ENCODE measurements at regions of chr7 and their contacts with region 1.

Region 1: GRCh38 chr7:90708841-90709317 is 112.8 kb downstream of the CDK14 start:
- DNase-seq: peak; percentile 84
- ATAC-seq: peak; percentile 53
- H3K4me3 ChIP-seq: peak overlapping the region; percentile 46 to 80 (median 59)
- H3K4me3 Mint-ChIP-seq: peak overlapping the region; percentile 88
- H3K27ac ChIP-seq: peak overlapping the region; percentile 72 to 83
- H3K27ac Mint-ChIP-seq: peak overlapping the region; percentile 90
- H3K4me1 ChIP-seq: peaks cover 59 to 66% of the 10 kb centered on the region in 2 donors
- H3K4me1 Mint-ChIP-seq: peaks cover 73% of the 10 kb centered on the region
- H3K27me3 ChIP-seq: no peaks in the 10 kb centered on the region
- H3K27me3 Mint-ChIP-seq: no peaks in the 10 kb centered on the region
- CTCF ChIP-seq: peak; percentile 86

Region 2: GRCh38 chr7:90403174-90404113 is 305.4 kb before region 1 on chr7 and contains the start of gene CLDN12:
- CTCF ChIA-PET with region 1: no interaction called
- POLR2A ChIA-PET with region 1: no interaction called
- intact Hi-C with region 1: loop called (anchors 10 kb)
- DNase-seq: peak; percentile 90
- ATAC-seq: peak; percentile 96
- H3K4me3 ChIP-seq: peak within 1 kb of the TSS; percentile 65 to 98 (median 81)
- H3K4me3 Mint-ChIP-seq: peak within 1 kb of the TSS; percentile 99
- H3K27ac ChIP-seq: peak within 1 kb of the TSS; percentile 47 to 72
- H3K27ac Mint-ChIP-seq: peak within 1 kb of the TSS; percentile 98
- H3K4me1 ChIP-seq: peaks cover 5% of the 10 kb centered on the region in 2 donors
- H3K4me1 Mint-ChIP-seq: peaks cover 20% of the 10 kb centered on the region
- H3K27me3 ChIP-seq: no peaks in the 10 kb centered on the region
- H3K27me3 Mint-ChIP-seq: no peaks in the 10 kb centered on the region
- CTCF ChIP-seq: no peak
- total RNA-seq, gene CLDN12: 14.1 and 17.3 TPM in 2 replicates

Region 3: GRCh38 chr7:90690159-90690858 is 18.6 kb before region 1 on chr7:
- CTCF ChIA-PET with region 1: interaction called, 13 read pairs
- POLR2A ChIA-PET with region 1: no interaction called
- intact Hi-C with region 1: no loop called
- DNase-seq: no peak
- ATAC-seq: peak; percentile 33
- H3K4me3 ChIP-seq: peak overlapping the region in 1 of 5 experiments; percentile 32
- H3K4me3 Mint-ChIP-seq: no peak overlapping the region
- H3K27ac ChIP-seq: no peak overlapping the region
- H3K27ac Mint-ChIP-seq: no peak overlapping the region
- H3K4me1 ChIP-seq: peaks cover 10 to 17% of the 10 kb centered on the region in 2 donors
- H3K4me1 Mint-ChIP-seq: peaks cover 35% of the 10 kb centered on the region
- H3K27me3 ChIP-seq: no peaks in the 10 kb centered on the region
- H3K27me3 Mint-ChIP-seq: no peaks in the 10 kb centered on the region
- CTCF ChIP-seq: peak; percentile 62

Region 4: GRCh38 chr7:90726623-90727022 is 17.7 kb after region 1 on chr7:
- CTCF ChIA-PET with region 1: interaction called, 16 read pairs
- POLR2A ChIA-PET with region 1: interaction called, 7 read pairs
- intact Hi-C with region 1: loop called (anchors 1 kb)
- DNase-seq: no peak
- ATAC-seq: no peak
- H3K4me3 ChIP-seq: peak overlapping the region in 4 of 5 experiments; percentile 9 to 59 (median 23)
- H3K4me3 Mint-ChIP-seq: peak overlapping the region; percentile 79
- H3K27ac ChIP-seq: peak overlapping the region; percentile 30 to 84
- H3K27ac Mint-ChIP-seq: peak overlapping the region; percentile 81
- H3K4me1 ChIP-seq: peaks cover 45 to 70% of the 10 kb centered on the region in 2 donors
- H3K4me1 Mint-ChIP-seq: peaks cover 81% of the 10 kb centered on the region
- H3K27me3 ChIP-seq: no peaks in the 10 kb centered on the region
- H3K27me3 Mint-ChIP-seq: no peaks in the 10 kb centered on the region
- CTCF ChIP-seq: no peak

Region 5: DNA sequence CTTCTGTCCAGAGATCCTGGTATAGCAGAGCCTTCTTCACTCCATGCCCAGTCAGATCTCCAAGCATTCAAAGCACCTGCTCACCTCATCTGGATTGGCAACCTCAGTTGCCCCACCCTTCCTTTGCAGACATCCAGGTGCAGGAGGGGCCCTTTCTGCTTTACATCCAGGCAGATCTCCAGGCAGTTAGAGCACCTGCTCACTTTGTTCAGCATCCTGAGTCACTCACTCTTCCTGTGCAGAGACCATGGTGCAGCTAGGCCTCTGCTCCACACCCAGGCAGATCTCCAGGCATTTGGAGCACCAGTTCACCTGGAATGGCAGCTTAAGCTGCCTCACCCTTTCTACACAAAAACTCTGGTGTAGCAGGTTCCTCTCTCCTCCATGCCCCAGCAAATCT is 40.4 kb after region 1 on chr7:
- CTCF ChIA-PET with region 1: interaction called, 72 read pairs
- POLR2A ChIA-PET with region 1: interaction called, 5 read pairs
- intact Hi-C with region 1: loop called (anchors 2 kb)
- DNase-seq: no peak
- ATAC-seq: no peak
- H3K4me3 ChIP-seq: no peak overlapping the region
- H3K4me3 Mint-ChIP-seq: peak overlapping the region; percentile 52
- H3K27ac ChIP-seq: no peak overlapping the region
- H3K27ac Mint-ChIP-seq: peak overlapping the region; percentile 54
- H3K4me1 ChIP-seq: peaks cover 15 to 24% of the 10 kb centered on the region in 2 donors
- H3K4me1 Mint-ChIP-seq: peaks cover 66% of the 10 kb centered on the region
- H3K27me3 ChIP-seq: no peaks in the 10 kb centered on the region
- H3K27me3 Mint-ChIP-seq: no peaks in the 10 kb centered on the region
- CTCF ChIP-seq: no peak

Region 6: GRCh38 chr7:91034459-91035368 is 325.8 kb after region 1 on chr7:
- CTCF ChIA-PET with region 1: interaction called, 64 read pairs
- POLR2A ChIA-PET with region 1: no interaction called
- intact Hi-C with region 1: loop called (anchors 1 kb)
- DNase-seq: peak; percentile 56
- ATAC-seq: no peak
- H3K4me3 ChIP-seq: no peak overlapping the region
- H3K4me3 Mint-ChIP-seq: no peak overlapping the region
- H3K27ac ChIP-seq: no peak overlapping the region
- H3K27ac Mint-ChIP-seq: no peak overlapping the region
- H3K4me1 ChIP-seq: no peaks in the 10 kb centered on the region
- H3K4me1 Mint-ChIP-seq: peaks cover 6% of the 10 kb centered on the region
- H3K27me3 ChIP-seq: no peaks in the 10 kb centered on the region
- H3K27me3 Mint-ChIP-seq: no peaks in the 10 kb centered on the region
- CTCF ChIP-seq: peak; percentile 68

Region 7: GRCh38 chr7:91527460-91527859 is 818.6 kb after region 1 on chr7:
- CTCF ChIA-PET with region 1: no interaction called
- POLR2A ChIA-PET with region 1: no interaction called
- intact Hi-C with region 1: no loop called
- DNase-seq: no peak
- ATAC-seq: no peak
- H3K4me3 ChIP-seq: no peak overlapping the region
- H3K4me3 Mint-ChIP-seq: no peak overlapping the region
- H3K27ac ChIP-seq: no peak overlapping the region
- H3K27ac Mint-ChIP-seq: no peak overlapping the region
- H3K4me1 ChIP-seq: no peaks in the 10 kb centered on the region
- H3K4me1 Mint-ChIP-seq: no peaks in the 10 kb centered on the region
- H3K27me3 ChIP-seq: no peaks in the 10 kb centered on the region
- H3K27me3 Mint-ChIP-seq: no peaks in the 10 kb centered on the region
- CTCF ChIP-seq: no peak